Activated CD4-positive, alpha-beta memory T cell treated with anti-CD3 and anti-CD28 coated beads for 36 hours (primary cell): ENCODE measurements at regions of chr12 and their contacts with region 1.

Region 1: GRCh38 chr12:15532364-15532977 is 210.2 kb downstream of the PTPRO start:
- DNase-seq: peak; percentile 68
- H3K4me3 Mint-ChIP-seq: no peak overlapping the region
- H3K27ac Mint-ChIP-seq: no peak overlapping the region
- H3K4me1 Mint-ChIP-seq: peaks cover 11% of the 10 kb centered on the region
- H3K27me3 Mint-ChIP-seq: no peaks in the 10 kb centered on the region

Region 2: DNA sequence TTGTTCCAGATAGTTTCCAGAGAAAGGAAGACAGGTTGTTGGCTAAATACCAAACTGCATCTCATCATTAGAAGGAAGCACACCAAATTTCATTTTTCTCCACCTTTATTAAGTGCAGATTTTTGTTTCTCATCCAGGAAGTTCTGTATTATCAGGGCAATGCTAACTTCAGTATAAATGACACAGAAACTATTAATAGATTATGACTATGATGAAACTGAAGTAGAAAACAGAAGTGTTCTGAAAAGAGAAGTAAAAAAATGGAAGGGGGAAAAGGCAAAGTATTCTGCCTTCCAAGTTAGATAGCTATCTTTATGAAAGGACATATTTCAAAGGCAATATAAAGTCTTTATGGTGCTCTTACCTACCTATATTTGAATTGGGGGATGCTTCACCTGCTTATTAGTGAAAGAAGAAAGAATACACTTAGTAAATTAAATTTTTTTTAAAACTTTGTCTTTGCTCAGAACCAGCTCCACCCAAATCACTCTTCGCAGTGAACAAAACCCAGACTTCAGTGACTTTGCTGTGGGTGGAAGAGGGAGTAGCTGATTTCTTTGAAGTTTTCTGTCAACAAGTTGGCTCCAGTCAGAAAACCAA is 13.7 kb after region 1 on chr12:
- CTCF ChIA-PET with region 1: interaction called, 19 read pairs
- POLR2A ChIA-PET with region 1: no interaction called
- intact Hi-C with region 1: loop called (anchors 1 kb)
- DNase-seq: peak; percentile 31
- H3K4me3 Mint-ChIP-seq: no peak overlapping the region
- H3K27ac Mint-ChIP-seq: peak overlapping the region; percentile 78
- H3K4me1 Mint-ChIP-seq: peaks cover 53% of the 10 kb centered on the region
- H3K27me3 Mint-ChIP-seq: no peaks in the 10 kb centered on the region

Region 3: GRCh38 chr12:15575671-15576541 is 43.4 kb after region 1 on chr12:
- CTCF ChIA-PET with region 1: interaction called, 478 read pairs
- POLR2A ChIA-PET with region 1: no interaction called
- intact Hi-C with region 1: loop called (anchors 1 kb)
- DNase-seq: no peak
- H3K4me3 Mint-ChIP-seq: no peak overlapping the region
- H3K27ac Mint-ChIP-seq: peak overlapping the region; percentile 7
- H3K4me1 Mint-ChIP-seq: peaks cover 39% of the 10 kb centered on the region
- H3K27me3 Mint-ChIP-seq: no peaks in the 10 kb centered on the region

Region 4: DNA sequence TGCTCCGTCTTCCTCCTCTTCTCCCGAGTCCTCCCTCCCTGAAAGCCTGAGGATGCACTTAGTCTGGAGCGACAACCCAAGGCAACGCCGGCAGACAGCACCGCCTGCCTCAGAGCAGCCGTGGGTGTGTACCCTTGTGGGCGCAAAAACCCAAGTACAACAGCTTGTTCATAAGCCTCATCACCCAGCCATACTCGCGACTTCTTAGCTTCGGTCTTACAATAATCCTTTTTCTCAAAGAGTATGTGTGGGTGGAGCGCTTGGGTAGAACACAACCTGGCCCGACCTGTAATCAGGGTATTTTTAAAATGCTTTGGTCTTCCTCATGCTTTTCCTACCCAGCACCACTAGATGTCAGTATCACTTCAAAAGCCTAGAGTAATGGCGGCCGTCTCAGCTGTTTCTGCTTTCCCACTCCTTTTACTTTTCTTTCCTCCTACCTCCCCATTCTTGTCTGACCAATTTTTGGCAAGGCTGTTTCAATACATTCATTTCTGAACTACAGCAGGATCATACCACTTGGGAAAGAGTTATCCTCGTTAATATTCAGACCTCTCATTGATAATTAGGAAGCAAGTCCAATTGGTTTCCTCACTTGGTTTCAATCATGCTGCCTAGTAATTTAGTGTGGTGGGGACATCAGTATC is 57.8 kb after region 1 on chr12:
- CTCF ChIA-PET with region 1: interaction called, 478 read pairs
- POLR2A ChIA-PET with region 1: no interaction called
- intact Hi-C with region 1: no loop called
- DNase-seq: peak; percentile 56
- H3K4me3 Mint-ChIP-seq: peak overlapping the region; percentile 70
- H3K27ac Mint-ChIP-seq: peak overlapping the region; percentile 21
- H3K4me1 Mint-ChIP-seq: peaks cover 8% of the 10 kb centered on the region
- H3K27me3 Mint-ChIP-seq: no peaks in the 10 kb centered on the region

Region 5: GRCh38 chr12:15679146-15679545 is 146.7 kb after region 1 on chr12:
- CTCF ChIA-PET with region 1: no interaction called
- POLR2A ChIA-PET with region 1: no interaction called
- intact Hi-C with region 1: no loop called
- DNase-seq: no peak
- H3K4me3 Mint-ChIP-seq: no peak overlapping the region
- H3K27ac Mint-ChIP-seq: no peak overlapping the region
- H3K4me1 Mint-ChIP-seq: no peaks in the 10 kb centered on the region
- H3K27me3 Mint-ChIP-seq: peaks cover 1% of the 10 kb centered on the region

Region 6: GRCh38 chr12:15856097-15856982 is 323.9 kb after region 1 on chr12:
- CTCF ChIA-PET with region 1: interaction called, 17 read pairs
- POLR2A ChIA-PET with region 1: no interaction called
- intact Hi-C with region 1: loop called (anchors 2 kb)
- DNase-seq: peak; percentile 22
- H3K4me3 Mint-ChIP-seq: no peak overlapping the region
- H3K27ac Mint-ChIP-seq: no peak overlapping the region
- H3K4me1 Mint-ChIP-seq: no peaks in the 10 kb centered on the region
- H3K27me3 Mint-ChIP-seq: peaks cover 5% of the 10 kb centered on the region